Dorsolateral prefrontal cortex (tissue), 120 donors: ENCODE measurements at regions of chr15 and their contacts with region 1.

Region 1: GRCh38 chr15:82046666-82047452 is 1.0 kb upstream of the MEX3B start:
- DNase-seq: peak; percentile 77 to 92 (median 84)
- H3K4me3 ChIP-seq: peak overlapping the region; percentile 67 to 95 (median 84)
- H3K27ac ChIP-seq: peak overlapping the region; percentile 71 to 99 (median 96)
- H3K27me3 ChIP-seq: peaks cover 0 to 7% (median 0%) of the 10 kb centered on the region in 45 donors
- CTCF ChIP-seq: peak; percentile 36 to 88 (median 72)

Region 2: GRCh38 chr15:80695104-80695910 is 1351.6 kb before region 1 on chr15 and contains the start of gene ABHD17C:
- intact Hi-C with region 1: loop called in 1 of 2 experiments (anchors 10 kb)
- DNase-seq: peak in 9 of 10 donors; percentile 26 to 78 (median 40)
- H3K4me3 ChIP-seq: peak within 1 kb of the TSS; percentile 59 to 91 (median 79)
- H3K27ac ChIP-seq: peak within 1 kb of the TSS in 52 of 59 donors; percentile 22 to 89 (median 74)
- H3K27me3 ChIP-seq: no peaks in the 10 kb centered on the region
- CTCF ChIP-seq: no peak
- total RNA-seq, gene ABHD17C: 14.5 to 33.2 (median 21.2) TPM

Region 3: DNA sequence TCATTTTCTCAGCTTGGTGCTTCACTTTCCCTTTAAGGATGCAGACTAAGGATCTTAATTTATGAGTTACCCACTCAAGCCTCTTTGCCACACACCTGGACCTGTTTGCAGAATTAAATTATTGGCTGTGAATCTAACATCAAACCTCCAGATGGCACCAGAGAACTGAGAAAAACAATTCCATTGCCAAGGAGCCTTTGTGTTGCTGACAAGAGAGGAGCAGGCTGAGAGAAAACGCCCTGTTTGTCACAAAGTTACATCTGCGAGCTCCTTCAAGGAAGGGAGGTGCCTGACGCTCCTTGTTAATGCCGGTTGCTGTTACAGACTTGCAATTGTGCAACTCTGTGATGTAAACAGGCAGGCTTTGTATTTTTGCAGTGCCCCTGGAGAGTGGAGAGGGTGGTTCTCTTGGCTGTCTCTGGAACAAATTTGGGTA is 636.5 kb before region 1 on chr15:
- intact Hi-C with region 1: loop called in 1 of 2 experiments (anchors 5 kb)
- DNase-seq: peak in 9 of 10 donors; percentile 5 to 77 (median 49)
- H3K4me3 ChIP-seq: peak overlapping the region in 1 of 59 donors; percentile 17
- H3K27ac ChIP-seq: peak overlapping the region in 18 of 59 donors; percentile 0 to 76 (median 39)
- H3K27me3 ChIP-seq: no peaks in the 10 kb centered on the region
- CTCF ChIP-seq: peak; percentile 27 to 81 (median 68)

Region 4: DNA sequence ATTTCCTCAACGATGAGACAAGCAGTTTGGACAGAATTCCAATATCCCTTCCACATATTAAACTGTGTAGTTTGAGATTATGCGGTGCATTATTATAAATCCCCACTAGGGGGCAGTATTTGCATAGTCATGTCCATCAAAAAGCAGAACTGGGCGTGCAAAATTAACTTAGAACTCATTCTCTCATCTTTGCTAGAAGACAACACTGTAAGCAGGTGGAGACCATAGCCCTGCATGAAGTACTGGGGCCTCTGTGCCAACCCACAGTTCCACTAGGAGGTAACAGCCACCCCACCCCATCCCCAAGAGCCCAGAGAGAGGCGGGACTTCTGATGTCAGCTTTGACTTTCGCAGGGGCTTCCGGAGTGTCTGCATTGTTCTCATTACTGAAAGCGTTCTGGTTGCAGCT is 566.2 kb before region 1 on chr15:
- intact Hi-C with region 1: loop called in 1 of 2 experiments (anchors 2 kb)
- DNase-seq: peak in 2 of 10 donors; percentile 32 to 48
- H3K4me3 ChIP-seq: peak overlapping the region in 21 of 59 donors; percentile 11 to 53 (median 27)
- H3K27ac ChIP-seq: peak overlapping the region in 1 of 59 donors; percentile 46
- H3K27me3 ChIP-seq: no peaks in the 10 kb centered on the region
- CTCF ChIP-seq: peak; percentile 81 to 100 (median 93)

Region 5: DNA sequence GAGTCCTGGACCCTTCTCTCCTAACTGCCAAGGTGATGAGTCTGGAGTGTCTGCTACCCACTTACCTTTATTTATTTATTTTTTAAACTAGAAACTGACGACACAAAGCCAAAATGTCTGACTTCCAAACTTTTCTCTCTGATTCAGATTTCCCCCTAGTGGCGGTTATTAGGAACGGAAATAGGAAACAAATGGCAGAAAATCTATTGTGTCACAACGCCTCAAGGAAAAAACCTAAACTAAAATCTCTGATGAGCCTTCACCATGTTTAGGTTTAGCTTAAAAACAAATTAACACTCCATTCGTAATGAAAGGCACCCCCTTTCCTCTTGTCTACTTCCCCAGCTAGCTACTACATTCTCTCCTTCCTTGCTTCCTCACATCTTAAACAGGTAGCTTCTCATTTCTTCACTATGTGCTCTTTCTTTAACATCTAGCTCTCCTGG is 93.0 kb after region 1 on chr15:
- intact Hi-C with region 1: loop called in 1 of 2 experiments (anchors 5 kb)
- DNase-seq: no peak
- H3K4me3 ChIP-seq: peak overlapping the region in 18 of 59 donors; percentile 4 to 44 (median 28)
- H3K27ac ChIP-seq: no peak overlapping the region
- H3K27me3 ChIP-seq: no peaks in the 10 kb centered on the region
- CTCF ChIP-seq: peak; percentile 59 to 94 (median 78)

Region 6: DNA sequence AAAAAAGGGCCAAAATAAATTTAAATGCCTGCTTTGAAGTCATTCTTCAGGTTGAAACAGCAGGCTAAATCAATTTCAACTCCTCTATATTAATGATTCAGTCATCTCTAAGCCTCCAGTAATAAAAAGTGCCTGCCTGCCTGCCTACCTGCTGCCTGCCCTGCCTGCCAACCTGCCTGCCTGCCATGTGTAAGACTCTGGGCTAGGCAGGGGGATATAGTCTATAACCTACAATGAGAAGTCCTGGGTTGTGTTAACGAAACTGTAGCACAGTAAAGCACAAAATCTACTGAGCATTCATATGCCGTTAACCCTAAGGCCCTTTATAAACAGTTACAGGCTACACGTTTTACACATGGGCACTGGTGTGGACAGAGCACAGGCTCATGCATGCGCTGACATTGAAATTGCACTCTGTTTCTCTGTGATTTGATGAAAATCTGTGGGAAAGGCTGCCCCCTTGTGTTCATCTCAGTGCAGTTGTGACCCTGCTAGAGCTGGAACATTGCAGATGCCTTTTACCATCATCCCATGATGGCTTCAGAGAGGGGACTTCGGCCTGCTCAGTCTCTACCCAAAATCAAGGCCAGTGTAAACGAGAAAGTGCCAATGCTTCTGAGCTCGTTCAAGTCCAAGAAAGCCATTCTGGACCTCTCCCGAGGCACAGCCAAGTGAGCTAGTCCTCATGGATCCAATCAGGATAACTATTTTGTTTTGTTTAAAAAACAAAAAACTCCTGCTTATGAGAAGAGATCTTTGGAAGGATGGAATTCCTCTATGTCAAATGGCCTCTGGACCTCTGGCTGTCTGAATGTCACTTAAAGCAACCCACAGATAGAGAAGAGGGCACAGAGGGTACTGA is 151.1 kb after region 1 on chr15:
- intact Hi-C with region 1: loop called in 1 of 2 experiments (anchors 5 kb)
- DNase-seq: peak; percentile 49 to 89 (median 74)
- H3K4me3 ChIP-seq: no peak overlapping the region
- H3K27ac ChIP-seq: peak overlapping the region in 3 of 59 donors; percentile 6 to 35 (median 34)
- H3K27me3 ChIP-seq: no peaks in the 10 kb centered on the region
- CTCF ChIP-seq: peak; percentile 64 to 96 (median 88)